ENCODE measurements at regions of chr11 and their contacts with region 1.

Region 1: DNA sequence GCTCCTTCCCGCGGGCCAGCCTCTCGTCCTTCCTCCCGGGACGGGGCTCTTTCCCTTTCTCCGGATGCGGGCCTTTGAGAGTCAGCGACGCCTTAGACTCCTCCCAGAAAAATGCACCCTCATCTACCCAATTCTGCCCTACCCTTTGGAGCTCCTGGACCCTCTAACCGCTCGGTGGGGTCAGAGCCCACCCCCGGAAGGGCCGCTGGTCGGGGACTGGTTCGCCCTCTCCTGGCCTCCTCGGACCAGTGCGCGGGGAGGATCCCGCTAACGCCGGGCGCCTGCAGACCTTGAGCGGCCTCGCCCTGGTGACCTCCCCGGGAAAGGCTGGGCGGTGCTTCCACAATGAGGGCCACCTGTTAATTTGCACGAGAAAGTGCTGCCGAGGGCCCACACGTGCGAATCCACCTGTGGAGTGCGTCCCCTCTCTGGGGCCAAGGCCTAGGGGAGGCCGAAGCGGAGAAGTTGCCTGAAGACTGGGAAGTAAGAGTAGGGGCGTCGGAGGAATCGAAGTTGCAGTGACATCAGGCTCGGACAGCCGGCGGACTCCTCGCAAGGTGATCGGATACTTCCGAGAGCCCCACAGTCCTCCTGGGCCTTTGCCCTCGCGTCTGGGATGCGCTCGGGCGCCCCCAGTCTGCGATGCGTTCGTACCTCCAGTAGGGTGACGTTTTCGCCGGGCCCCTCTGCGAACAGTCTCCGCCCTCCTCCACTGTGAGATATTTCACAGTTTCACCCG is 61.5 kb downstream of the ENDOD1 start:
- DNase-seq: peak; percentile 93 to 94
- ATAC-seq: peak; percentile 81

Region 2: GRCh38 chr11:94973099-94973968 is 177.8 kb before region 1 on chr11 and contains the starts of genes CWC15 and KDM4D:
- intact Hi-C with region 1: loop called in 1 of 2 experiments (anchors 10 kb)
- DNase-seq: peak; percentile 94 to 95
- ATAC-seq: peak; percentile 100
- total RNA-seq, gene CWC15: 44.0 to 44.3 TPM
- total RNA-seq, gene KDM4D: 0.25 to 0.55 TPM

Region 3: GRCh38 chr11:95067039-95067840 is 83.9 kb before region 1 on chr11:
- intact Hi-C with region 1: loop called in 1 of 2 experiments (anchors 5 kb)
- DNase-seq: peak; percentile 74 to 89
- ATAC-seq: peak; percentile 76

Region 4: GRCh38 chr11:95375886-95376285 is 224.8 kb after region 1 on chr11:
- intact Hi-C with region 1: no loop called
- DNase-seq: no peak
- ATAC-seq: no peak

Region 5: GRCh38 chr11:95705485-95706124 is 554.5 kb after region 1 on chr11:
- intact Hi-C with region 1: loop called (anchors 2 to 10 kb)
- DNase-seq: peak; percentile 78 to 84
- ATAC-seq: peak; percentile 99

Region 6: GRCh38 chr11:95764267-95764898 is 613.3 kb after region 1 on chr11:
- intact Hi-C with region 1: loop called (anchors 5 to 10 kb)
- DNase-seq: no peak
- ATAC-seq: peak; percentile 61

Measured in left colon (tissue), 2 donors.